CD8-positive, alpha-beta T cell (primary cell): ENCODE measurements at regions of chr21 and their contacts with region 1.

Region 1: GRCh38 chr21:25801217-25802014 is 66.6 kb downstream of the GABPA start:
- DNase-seq: peak; percentile 63 to 88 (median 82)
- ATAC-seq: peak; percentile 100
- H3K4me3 ChIP-seq: no peak overlapping the region
- H3K4me3 Mint-ChIP-seq: peak overlapping the region; percentile 30
- H3K27ac ChIP-seq: no peak overlapping the region
- H3K27ac Mint-ChIP-seq: no peak overlapping the region
- H3K4me1 ChIP-seq: peaks cover 3% of the 10 kb centered on the region
- H3K4me1 Mint-ChIP-seq: peaks cover 7% of the 10 kb centered on the region
- H3K27me3 ChIP-seq: no peaks in the 10 kb centered on the region
- H3K27me3 Mint-ChIP-seq: peaks cover 10% of the 10 kb centered on the region
- CTCF ChIP-seq: peak; percentile 97

Region 2: DNA sequence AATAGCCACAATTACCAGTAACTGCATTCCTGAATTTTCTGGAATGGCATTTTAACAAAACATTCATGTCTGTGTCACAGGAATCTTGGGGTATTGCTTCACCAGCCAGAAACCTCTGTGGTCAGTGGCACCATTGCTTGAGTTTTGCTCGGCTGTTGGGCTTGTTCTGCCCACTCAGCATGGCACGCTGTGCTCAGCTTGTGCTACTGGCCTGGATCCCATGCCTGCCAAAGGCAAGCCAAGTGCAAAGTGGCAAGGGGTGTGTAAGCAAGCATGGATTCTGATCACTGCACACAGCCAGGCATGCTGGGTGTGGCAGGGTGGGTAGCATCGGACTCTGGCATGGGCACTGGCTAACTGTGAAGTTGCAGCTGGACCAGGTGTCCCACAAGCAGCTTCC is 1345.1 kb before region 1 on chr21:
- CTCF ChIA-PET with region 1: no interaction called
- POLR2A ChIA-PET with region 1: no interaction called
- intact Hi-C with region 1: no loop called
- DNase-seq: no peak
- ATAC-seq: no peak
- H3K4me3 ChIP-seq: no peak overlapping the region
- H3K4me3 Mint-ChIP-seq: no peak overlapping the region
- H3K27ac ChIP-seq: no peak overlapping the region
- H3K27ac Mint-ChIP-seq: no peak overlapping the region
- H3K4me1 ChIP-seq: no peaks in the 10 kb centered on the region
- H3K4me1 Mint-ChIP-seq: no peaks in the 10 kb centered on the region
- H3K27me3 ChIP-seq: no peaks in the 10 kb centered on the region
- H3K27me3 Mint-ChIP-seq: no peaks in the 10 kb centered on the region
- CTCF ChIP-seq: no peak

Region 3: GRCh38 chr21:25688275-25689155 is 112.9 kb before region 1 on chr21:
- CTCF ChIA-PET with region 1: no interaction called
- POLR2A ChIA-PET with region 1: no interaction called
- intact Hi-C with region 1: no loop called
- DNase-seq: no peak
- ATAC-seq: no peak
- H3K4me3 ChIP-seq: no peak overlapping the region
- H3K4me3 Mint-ChIP-seq: no peak overlapping the region
- H3K27ac ChIP-seq: no peak overlapping the region
- H3K27ac Mint-ChIP-seq: no peak overlapping the region
- H3K4me1 ChIP-seq: no peaks in the 10 kb centered on the region
- H3K4me1 Mint-ChIP-seq: no peaks in the 10 kb centered on the region
- H3K27me3 ChIP-seq: peaks cover 0 to 2% of the 10 kb centered on the region in 2 experiments
- H3K27me3 Mint-ChIP-seq: peaks cover 2% of the 10 kb centered on the region
- CTCF ChIP-seq: no peak

Region 4: GRCh38 chr21:25790122-25790877 is 11.1 kb before region 1 on chr21:
- CTCF ChIA-PET with region 1: interaction called, 10 read pairs
- POLR2A ChIA-PET with region 1: no interaction called
- intact Hi-C with region 1: no loop called
- DNase-seq: peak in 2 of 9 experiments; percentile 10 to 25
- ATAC-seq: no peak
- H3K4me3 ChIP-seq: peak overlapping the region; percentile 18 to 29
- H3K4me3 Mint-ChIP-seq: peak overlapping the region; percentile 78
- H3K27ac ChIP-seq: no peak overlapping the region
- H3K27ac Mint-ChIP-seq: no peak overlapping the region
- H3K4me1 ChIP-seq: no peaks in the 10 kb centered on the region
- H3K4me1 Mint-ChIP-seq: peaks cover 10% of the 10 kb centered on the region
- H3K27me3 ChIP-seq: no peaks in the 10 kb centered on the region
- H3K27me3 Mint-ChIP-seq: peaks cover 18% of the 10 kb centered on the region
- CTCF ChIP-seq: peak; percentile 39

Region 5: DNA sequence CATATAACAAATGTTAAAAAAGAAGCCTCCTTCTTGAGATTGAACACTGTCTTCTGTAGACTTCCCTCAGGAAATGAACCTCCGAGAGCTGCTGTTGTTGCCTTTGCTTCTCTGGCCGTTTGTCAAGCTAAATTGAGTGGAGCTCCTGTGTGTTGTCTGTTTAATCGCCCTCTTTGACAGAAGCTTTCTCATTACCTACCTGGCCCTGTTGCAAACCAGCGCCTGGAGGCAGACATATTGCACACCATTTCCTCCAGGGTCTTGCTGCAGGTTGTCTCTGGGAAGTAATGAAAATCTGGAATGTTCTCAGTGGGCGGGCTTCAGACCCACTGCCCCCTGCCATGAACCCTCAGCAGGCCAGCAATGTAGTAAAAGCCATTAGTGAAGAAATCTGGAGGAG is 16.7 kb after region 1 on chr21:
- CTCF ChIA-PET with region 1: interaction called, 14 read pairs
- POLR2A ChIA-PET with region 1: no interaction called
- intact Hi-C with region 1: no loop called
- DNase-seq: no peak
- ATAC-seq: no peak
- H3K4me3 ChIP-seq: no peak overlapping the region
- H3K4me3 Mint-ChIP-seq: no peak overlapping the region
- H3K27ac ChIP-seq: no peak overlapping the region
- H3K27ac Mint-ChIP-seq: no peak overlapping the region
- H3K4me1 ChIP-seq: no peaks in the 10 kb centered on the region
- H3K4me1 Mint-ChIP-seq: no peaks in the 10 kb centered on the region
- H3K27me3 ChIP-seq: no peaks in the 10 kb centered on the region
- H3K27me3 Mint-ChIP-seq: no peaks in the 10 kb centered on the region
- CTCF ChIP-seq: no peak

Region 6: GRCh38 chr21:25934771-25935224 is 133.4 kb after region 1 on chr21:
- CTCF ChIA-PET with region 1: no interaction called
- POLR2A ChIA-PET with region 1: no interaction called
- intact Hi-C with region 1: no loop called
- DNase-seq: no peak
- ATAC-seq: no peak
- H3K4me3 ChIP-seq: no peak overlapping the region
- H3K4me3 Mint-ChIP-seq: no peak overlapping the region
- H3K27ac ChIP-seq: no peak overlapping the region
- H3K27ac Mint-ChIP-seq: no peak overlapping the region
- H3K4me1 ChIP-seq: no peaks in the 10 kb centered on the region
- H3K4me1 Mint-ChIP-seq: peaks cover 2% of the 10 kb centered on the region
- H3K27me3 ChIP-seq: no peaks in the 10 kb centered on the region
- H3K27me3 Mint-ChIP-seq: no peaks in the 10 kb centered on the region
- CTCF ChIP-seq: no peak